Ovary (tissue), 10 donors: ENCODE measurements at regions of chr9 and their contacts with region 1.

Region 1: DNA sequence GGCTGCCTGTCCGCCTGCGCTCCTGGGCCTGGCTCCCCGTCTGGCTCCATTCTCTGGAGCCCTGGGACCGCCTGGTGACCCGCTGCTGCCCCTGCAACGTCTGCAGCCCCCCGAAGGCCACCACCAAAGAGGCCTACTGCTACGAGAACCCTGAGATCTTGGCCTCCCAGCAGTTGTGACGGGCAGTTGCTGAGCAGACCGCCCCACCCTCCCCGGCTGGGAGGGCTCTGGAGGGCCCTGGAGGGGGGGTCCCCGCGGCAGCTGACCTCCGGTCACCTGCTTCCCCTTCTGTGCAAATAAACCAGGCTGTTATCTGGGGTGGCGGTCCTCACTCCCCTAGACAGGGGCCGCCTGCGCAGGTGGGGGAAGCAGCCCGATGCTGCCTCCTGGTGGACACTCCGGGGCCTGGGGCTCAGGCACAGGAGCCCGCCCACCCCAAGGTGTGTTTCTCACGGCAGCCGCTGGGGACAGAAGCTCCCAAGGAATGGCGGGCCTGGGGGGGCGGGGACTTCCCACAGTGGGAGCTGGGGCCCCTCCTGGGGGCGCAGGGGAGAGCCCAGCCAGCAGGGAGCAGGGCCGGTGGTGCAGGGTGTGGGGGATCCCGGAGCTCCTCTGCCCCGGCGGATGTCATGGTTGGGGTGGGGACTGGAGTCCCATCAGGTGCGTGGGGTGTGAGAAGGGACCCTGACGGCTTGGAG is 4.7 kb upstream of the TUBB4B start:
- DNase-seq: peak; percentile 88 to 92 (median 90)
- H3K4me3 ChIP-seq: peak overlapping the region; percentile 25
- H3K27ac ChIP-seq: peak overlapping the region in 1 of 2 donors; percentile 32
- H3K4me1 ChIP-seq: peaks cover 11% of the 10 kb centered on the region
- H3K27me3 ChIP-seq: no peaks in the 10 kb centered on the region
- CTCF ChIP-seq: peak; percentile 96 to 99 (median 99)
- EP300 ChIP-seq: no peak
- POLR2A ChIP-seq: no peak

Region 2: DNA sequence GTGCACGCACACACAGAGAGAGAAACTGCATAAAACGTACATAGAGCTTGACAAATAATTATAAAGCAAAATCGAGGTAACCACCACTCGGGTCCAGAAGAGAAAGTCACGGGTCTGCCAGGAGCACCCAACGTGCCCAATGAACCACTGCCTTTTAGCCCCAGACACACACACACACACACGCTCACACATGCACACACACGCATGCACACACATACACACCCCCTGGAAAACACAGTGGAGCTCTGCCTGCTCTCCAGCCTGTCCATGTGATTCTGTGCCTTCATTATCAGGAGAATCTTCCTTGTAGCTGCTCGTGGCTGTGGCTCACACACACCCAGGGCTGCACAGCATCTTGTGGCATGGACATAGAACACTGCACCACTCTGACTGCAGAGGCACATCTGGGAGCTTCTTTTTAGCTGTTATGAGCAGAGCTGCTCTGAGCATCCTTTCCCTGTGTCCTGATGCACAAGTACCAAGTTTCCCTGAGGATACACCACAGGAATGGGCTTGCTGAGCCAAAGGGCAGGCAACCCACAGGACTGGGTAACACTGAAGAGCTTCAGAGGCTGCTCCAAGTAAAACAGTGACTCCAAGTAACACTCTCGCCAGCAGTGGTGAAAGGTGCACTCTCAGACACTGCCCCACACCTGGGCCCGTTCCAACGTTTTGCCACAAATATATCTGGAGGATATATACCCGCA is 1387.9 kb before region 1 on chr9:
- intact Hi-C with region 1: no loop called
- DNase-seq: no peak
- H3K4me3 ChIP-seq: no peak overlapping the region
- H3K27ac ChIP-seq: no peak overlapping the region
- H3K4me1 ChIP-seq: peaks cover 2% of the 10 kb centered on the region
- H3K27me3 ChIP-seq: no peaks in the 10 kb centered on the region
- CTCF ChIP-seq: no peak
- EP300 ChIP-seq: no peak
- POLR2A ChIP-seq: no peak

Region 3: DNA sequence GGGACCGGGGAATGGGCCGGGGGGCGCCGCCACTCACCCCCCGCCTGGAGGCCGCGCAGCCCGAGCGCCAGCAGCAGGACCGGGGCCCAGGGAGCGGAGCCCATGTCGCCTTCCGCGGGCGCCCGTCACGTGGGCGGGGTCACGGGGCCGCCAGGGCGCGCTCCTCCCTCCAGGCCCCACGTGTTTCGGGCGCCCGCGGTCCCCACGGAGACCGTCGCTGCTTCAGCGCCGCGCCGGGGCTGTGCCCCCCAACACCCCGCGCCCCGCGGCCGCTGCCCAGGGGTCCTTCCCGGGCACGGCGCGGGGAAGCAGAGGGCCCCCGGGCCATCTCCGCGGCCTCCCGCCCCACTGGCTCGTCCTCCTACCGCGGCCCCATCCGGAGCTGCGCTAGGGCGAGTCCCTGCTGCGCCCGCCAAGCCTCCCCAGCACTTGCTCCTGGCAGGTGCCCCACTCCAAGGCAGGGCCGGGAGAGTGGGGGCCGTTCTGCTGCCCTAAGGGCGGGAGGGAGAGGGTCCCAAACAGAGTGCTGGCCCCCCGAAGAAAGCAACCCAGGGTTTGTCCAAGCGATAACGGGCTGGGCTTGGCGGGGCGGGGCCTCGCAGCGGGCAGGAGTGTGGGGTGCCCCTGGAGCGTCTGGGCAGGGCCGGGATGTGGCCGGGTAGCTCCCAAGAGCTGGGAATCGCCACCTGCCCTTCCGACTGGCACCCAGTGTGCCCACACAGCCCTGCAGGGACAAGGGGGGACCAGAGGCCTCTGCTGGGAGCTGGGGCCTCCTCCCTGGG is 121.6 kb before region 1 on chr9 and contains the start of gene DPP7:
- intact Hi-C with region 1: loop called in 1 of 4 experiments (anchors 10 kb)
- DNase-seq: peak; percentile 65 to 79 (median 67)
- H3K4me3 ChIP-seq: peak within 1 kb of the TSS; percentile 58
- H3K27ac ChIP-seq: no peak within 1 kb of the TSS
- H3K4me1 ChIP-seq: peaks cover 4% of the 10 kb centered on the region
- H3K27me3 ChIP-seq: no peaks in the 10 kb centered on the region
- CTCF ChIP-seq: no peak
- EP300 ChIP-seq: no peak
- POLR2A ChIP-seq: no peak
- total RNA-seq, gene DPP7: 39.8 to 117 (median 95.6) TPM